Transverse colon (tissue), 4 donors: ENCODE measurements at regions of chr14 and their contacts with region 1.

Region 1: DNA sequence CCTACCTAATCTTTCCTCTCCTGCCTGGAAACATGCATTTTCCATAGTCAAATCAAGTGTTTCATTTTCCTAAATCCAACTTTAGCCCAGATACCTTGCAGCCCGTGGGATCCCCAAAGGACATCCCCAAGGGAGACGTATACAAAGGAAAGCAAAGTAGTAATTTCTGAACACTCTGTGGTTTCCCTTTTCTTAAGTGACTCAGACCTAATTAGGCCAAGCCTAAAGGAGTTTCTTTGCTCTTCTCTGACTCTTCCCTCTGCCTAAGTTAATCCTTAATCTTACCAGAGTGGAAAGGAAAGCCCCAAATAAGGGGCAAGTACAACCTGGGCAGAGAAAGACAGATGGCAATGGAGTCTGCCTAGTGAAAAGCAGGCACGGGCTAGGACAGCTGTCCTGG is 250.3 kb downstream of the SPTSSA start:
- DNase-seq: no peak
- H3K4me3 ChIP-seq: no peak overlapping the region
- H3K27ac ChIP-seq: no peak overlapping the region
- H3K4me1 ChIP-seq: no peaks in the 10 kb centered on the region
- H3K27me3 ChIP-seq: no peaks in the 10 kb centered on the region
- CTCF ChIP-seq: no peak
- EP300 ChIP-seq: no peak
- POLR2A ChIP-seq: no peak

Region 2: GRCh38 chr14:34059855-34060638 is 151.7 kb before region 1 on chr14:
- in situ Hi-C with region 1: no loop called
- intact Hi-C with region 1: loop called (anchors 10 kb)
- DNase-seq: peak; percentile 87
- H3K4me3 ChIP-seq: peak overlapping the region; percentile 42 to 62 (median 50)
- H3K27ac ChIP-seq: peak overlapping the region; percentile 86 to 90 (median 88)
- H3K4me1 ChIP-seq: peaks cover 6 to 15% (median 8%) of the 10 kb centered on the region in 4 donors
- H3K27me3 ChIP-seq: no peaks in the 10 kb centered on the region
- CTCF ChIP-seq: peak in 4 of 5 experiments; percentile 19 to 48 (median 33)
- EP300 ChIP-seq: no peak
- POLR2A ChIP-seq: peak; percentile 80